Right lobe of liver (tissue), 6 donors: ENCODE measurements at regions of chr13 and their contacts with region 1.

Region 1: DNA sequence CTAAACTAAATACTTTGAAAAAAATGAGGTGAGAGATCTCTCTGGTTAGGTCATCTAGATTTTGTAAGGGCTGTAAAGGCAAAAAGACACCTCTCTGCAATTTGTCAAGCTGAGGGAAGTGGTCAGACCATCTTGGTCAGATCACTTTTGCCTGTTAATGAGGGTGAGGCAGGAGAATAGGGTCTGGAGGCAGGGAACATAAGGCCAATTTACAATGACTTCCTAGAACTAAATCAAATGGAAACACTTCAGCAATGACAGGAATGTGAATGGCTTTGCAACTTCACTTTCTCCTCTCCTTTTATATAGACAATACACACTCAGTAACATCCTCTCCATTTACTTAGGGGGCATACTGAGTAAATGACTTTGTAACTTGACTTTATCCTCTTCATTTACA is 1653.4 kb downstream of the SLITRK5 start:
- DNase-seq: no peak
- ATAC-seq: no peak
- H3K4me3 ChIP-seq: no peak overlapping the region
- H3K27ac ChIP-seq: no peak overlapping the region
- H3K4me1 ChIP-seq: no peaks in the 10 kb centered on the region
- H3K27me3 ChIP-seq: no peaks in the 10 kb centered on the region
- CTCF ChIP-seq: no peak
- POLR2A ChIP-seq: no peak

Region 2: DNA sequence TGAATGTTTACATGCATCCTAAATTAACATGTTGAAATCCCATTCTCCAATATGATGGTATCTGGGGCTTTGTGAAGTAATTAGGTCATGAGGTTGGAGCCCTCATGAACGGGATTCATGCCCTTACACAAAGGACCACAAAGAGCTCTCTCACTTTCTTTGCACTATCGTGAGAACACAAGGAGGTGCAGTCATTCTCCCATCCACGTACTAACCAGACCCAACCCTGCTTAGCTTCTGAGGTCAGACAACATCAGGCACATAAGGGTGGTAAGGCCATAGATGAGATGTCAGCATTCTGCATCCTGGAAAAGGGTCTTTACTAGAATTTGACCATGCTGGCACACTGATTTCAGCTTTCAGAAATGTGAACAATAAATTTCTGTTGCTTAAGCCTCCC is 811.0 kb after region 1 on chr13:
- intact Hi-C with region 1: loop called in 1 of 2 experiments (anchors 10 kb)
- DNase-seq: no peak
- ATAC-seq: no peak
- H3K4me3 ChIP-seq: no peak overlapping the region
- H3K27ac ChIP-seq: no peak overlapping the region
- H3K4me1 ChIP-seq: no peaks in the 10 kb centered on the region
- H3K27me3 ChIP-seq: no peaks in the 10 kb centered on the region
- CTCF ChIP-seq: no peak
- POLR2A ChIP-seq: no peak